ENCODE measurements at regions of chr9 and their contacts with region 1.

Region 1: GRCh38 chr9:70484210-70485130 is 70.0 kb upstream of the KLF9 start:
- DNase-seq: no peak
- H3K4me3 ChIP-seq: no peak overlapping the region
- CTCF ChIP-seq: peak; percentile 74

Region 2: DNA sequence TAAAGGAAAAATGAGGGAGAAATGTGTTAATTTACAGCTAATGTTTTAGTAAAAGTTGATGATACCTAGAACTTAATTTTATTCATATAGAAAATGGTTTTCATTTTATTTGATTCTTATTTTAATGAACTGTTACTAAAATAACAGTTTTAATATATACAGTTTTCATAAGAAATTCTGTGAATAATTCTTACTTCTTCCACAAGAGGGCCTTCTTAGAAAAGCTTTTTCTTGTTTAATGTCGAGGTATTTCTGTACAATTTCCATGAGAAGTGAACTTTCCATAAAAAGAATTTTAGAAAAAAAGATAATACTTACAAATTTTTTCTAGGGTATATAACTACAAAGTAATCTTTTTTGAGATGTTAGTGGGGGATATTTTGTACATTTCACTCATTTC is 143.9 kb before region 1 on chr9:
- CTCF ChIA-PET with region 1: interaction called, 37 read pairs
- POLR2A ChIA-PET with region 1: no interaction called
- DNase-seq: no peak
- H3K4me3 ChIP-seq: no peak overlapping the region
- CTCF ChIP-seq: peak; percentile 8

Region 3: GRCh38 chr9:70427161-70427945 is 57.1 kb before region 1 on chr9:
- CTCF ChIA-PET with region 1: interaction called, 10 read pairs
- POLR2A ChIA-PET with region 1: no interaction called
- DNase-seq: no peak
- H3K4me3 ChIP-seq: no peak overlapping the region
- CTCF ChIP-seq: no peak

Region 4: DNA sequence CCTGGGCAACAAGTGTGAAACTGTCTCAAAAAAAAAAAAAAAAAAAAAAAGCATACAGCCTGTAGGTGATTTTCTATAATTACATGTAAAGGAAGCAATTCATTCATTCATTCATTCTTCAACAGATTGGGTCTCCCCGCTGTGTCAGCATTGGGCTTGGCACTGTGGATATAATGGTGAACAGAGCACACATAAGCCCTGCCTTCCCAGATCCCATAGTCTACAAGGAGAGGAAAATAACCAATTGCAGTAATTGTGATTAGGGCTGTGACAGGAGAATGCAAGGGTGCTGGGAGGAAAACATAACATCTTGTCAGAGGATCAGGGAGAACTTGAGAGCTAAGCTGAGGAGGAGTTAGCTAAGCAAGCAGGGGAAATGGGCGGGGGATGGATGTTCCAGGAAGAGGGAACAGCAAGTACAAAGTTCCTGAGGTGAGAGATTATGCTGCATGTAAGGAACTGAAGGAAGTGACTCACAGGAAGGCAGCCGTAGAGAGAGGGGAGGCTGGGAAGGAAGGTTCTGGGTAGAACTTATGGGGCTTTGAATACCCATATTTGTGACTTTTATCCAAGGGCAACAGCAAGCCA is 46.0 kb before region 1 on chr9:
- CTCF ChIA-PET with region 1: interaction called, 10 read pairs
- POLR2A ChIA-PET with region 1: no interaction called
- DNase-seq: no peak
- H3K4me3 ChIP-seq: no peak overlapping the region
- CTCF ChIP-seq: no peak

Region 5: GRCh38 chr9:70462300-70462699 is 22.2 kb before region 1 on chr9:
- CTCF ChIA-PET with region 1: interaction called, 16 read pairs
- POLR2A ChIA-PET with region 1: no interaction called
- DNase-seq: no peak
- H3K4me3 ChIP-seq: no peak overlapping the region
- CTCF ChIP-seq: no peak

Region 6: GRCh38 chr9:70504834-70505233 is 20.4 kb after region 1 on chr9:
- CTCF ChIA-PET with region 1: interaction called, 70 read pairs
- POLR2A ChIA-PET with region 1: no interaction called
- DNase-seq: no peak
- H3K4me3 ChIP-seq: no peak overlapping the region
- CTCF ChIP-seq: no peak

Region 7: GRCh38 chr9:70510157-70510770 is 25.8 kb after region 1 on chr9:
- CTCF ChIA-PET with region 1: interaction called, 12 read pairs
- POLR2A ChIA-PET with region 1: no interaction called
- DNase-seq: no peak
- H3K4me3 ChIP-seq: no peak overlapping the region
- CTCF ChIP-seq: peak; percentile 39

Region 8: DNA sequence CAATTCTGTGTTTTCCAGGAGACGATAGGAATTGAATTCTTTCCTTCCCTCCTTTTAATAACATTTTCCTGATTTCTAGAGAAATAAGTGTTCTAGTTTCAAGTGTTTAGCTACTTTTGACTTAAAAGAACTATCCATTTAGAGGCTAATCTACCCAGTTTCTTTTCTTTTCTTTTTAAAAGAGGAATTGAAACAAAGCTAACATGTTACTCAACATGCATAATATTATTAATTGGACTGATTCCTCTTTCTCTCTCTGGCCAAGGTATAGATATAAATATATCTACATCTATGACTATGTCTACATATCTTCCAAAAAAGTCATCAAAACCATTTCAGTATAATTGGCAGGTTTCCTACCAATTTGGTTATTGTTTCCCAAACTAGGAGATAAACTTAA is 327.2 kb after region 1 on chr9:
- CTCF ChIA-PET with region 1: no interaction called
- POLR2A ChIA-PET with region 1: no interaction called
- DNase-seq: no peak
- H3K4me3 ChIP-seq: no peak overlapping the region
- CTCF ChIP-seq: no peak